ENCODE measurements at regions of chr18 and their contacts with region 1.

Region 1: DNA sequence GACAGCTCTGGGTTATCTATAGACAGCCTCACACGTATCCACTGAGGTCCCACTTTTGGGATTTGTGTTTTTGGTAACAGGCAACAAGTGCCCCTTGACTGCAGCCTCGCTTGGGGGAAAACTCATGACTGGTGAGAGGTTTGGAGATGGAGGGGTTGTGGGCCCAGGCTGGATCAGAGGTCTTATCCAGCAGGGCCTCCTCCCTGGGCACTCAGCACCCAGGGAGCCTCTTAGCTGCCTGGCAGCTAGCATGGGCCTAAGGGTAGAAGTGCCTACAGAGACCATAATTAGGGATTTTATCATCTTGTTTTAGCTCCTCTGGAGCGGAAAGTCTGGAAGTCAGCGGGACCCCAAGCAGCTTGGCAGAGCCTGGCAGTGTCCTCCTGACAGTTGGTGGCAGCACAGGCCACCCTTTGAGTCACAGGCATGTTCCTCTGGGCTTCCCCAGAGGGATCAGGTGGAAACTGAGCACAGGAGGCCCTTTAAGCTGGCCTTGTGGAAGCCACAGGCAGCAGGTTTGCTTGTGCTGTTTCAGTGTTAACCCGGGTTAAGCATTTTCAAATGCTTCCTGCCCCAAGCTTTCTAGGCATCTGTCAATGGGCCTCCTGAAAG is 143.1 kb downstream of the KCTD1 start:
- DNase-seq: no peak
- H3K4me3 ChIP-seq: no peak overlapping the region
- H3K27ac ChIP-seq: no peak overlapping the region
- H3K4me1 ChIP-seq: peaks cover 0 to 33% (median 8%) of the 10 kb centered on the region in 3 donors
- H3K27me3 ChIP-seq: no peaks in the 10 kb centered on the region
- CTCF ChIP-seq: peak in 4 of 6 experiments; percentile 15 to 51 (median 22)
- POLR2A ChIP-seq: no peak

Region 2: DNA sequence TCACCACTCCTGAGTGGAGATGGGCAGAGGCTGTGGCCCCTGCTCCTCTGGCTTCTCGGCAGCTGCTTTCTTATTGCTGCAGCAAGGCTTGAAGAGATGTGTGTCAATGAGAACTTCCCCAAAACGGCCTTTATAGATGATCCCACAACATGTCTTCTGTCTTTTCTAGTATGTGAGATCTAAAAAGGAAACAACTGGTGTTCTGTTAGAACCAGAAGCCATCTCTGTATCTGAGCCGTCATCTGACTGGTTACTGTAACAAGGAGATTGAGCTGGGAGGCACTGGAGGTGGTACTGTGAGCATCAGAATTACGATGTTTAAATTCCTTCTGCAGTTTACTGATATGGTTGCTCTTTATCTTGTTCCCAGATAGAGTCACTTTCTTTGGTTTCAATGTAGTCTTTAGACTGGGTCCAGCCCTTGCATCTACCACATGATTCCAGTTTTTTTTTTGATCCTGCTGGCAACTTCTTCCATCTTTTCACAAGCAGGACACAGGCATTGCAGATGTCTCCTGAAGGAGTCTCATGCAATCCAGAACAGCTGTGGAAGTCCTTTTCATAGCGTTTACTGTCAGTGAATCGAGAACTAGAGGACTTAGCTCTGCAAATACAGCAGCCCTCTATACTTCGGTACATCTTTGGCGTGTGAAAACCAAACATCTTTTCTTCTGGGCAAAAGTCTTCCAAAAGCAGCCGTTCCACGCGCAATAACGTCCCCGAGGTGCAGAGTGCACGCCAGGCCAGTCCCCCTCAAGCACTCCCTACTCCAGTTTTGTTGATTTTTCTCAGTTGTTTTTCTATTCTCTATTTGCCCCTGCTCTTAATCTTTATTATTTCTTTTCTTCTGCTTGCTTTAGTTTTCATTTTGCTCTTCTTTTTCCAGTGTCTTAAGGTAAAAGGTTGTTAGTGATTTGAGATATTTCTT is 149.3 kb before region 1 on chr18:
- intact Hi-C with region 1: no loop called
- DNase-seq: no peak
- H3K4me3 ChIP-seq: no peak overlapping the region
- H3K27ac ChIP-seq: no peak overlapping the region
- H3K4me1 ChIP-seq: no peaks in the 10 kb centered on the region
- H3K27me3 ChIP-seq: no peaks in the 10 kb centered on the region
- CTCF ChIP-seq: no peak
- POLR2A ChIP-seq: no peak

Region 3: GRCh38 chr18:26656944-26657536 is 251.7 kb after region 1 on chr18:
- intact Hi-C with region 1: loop called (anchors 10 kb)
- DNase-seq: no peak
- H3K4me3 ChIP-seq: peak overlapping the region; percentile 61 to 89 (median 78)
- H3K27ac ChIP-seq: peak overlapping the region; percentile 74 to 93 (median 78)
- H3K4me1 ChIP-seq: peaks cover 9 to 46% (median 17%) of the 10 kb centered on the region in 3 donors
- H3K27me3 ChIP-seq: peaks cover 0 to 16% (median 0%) of the 10 kb centered on the region in 4 donors
- CTCF ChIP-seq: peak in 4 of 6 experiments; percentile 15 to 55 (median 30)
- POLR2A ChIP-seq: peak in 2 of 4 donors; percentile 50 to 61